Mammary epithelial cell (primary cell): ENCODE measurements at regions of chr5 and their contacts with region 1.

Region 1: GRCh38 chr5:140718241-140718580 is 18.0 kb downstream of the ZMAT2 start:
- DNase-seq: no peak
- H3K4me3 ChIP-seq: no peak overlapping the region
- H3K27ac ChIP-seq: no peak overlapping the region
- H3K4me1 ChIP-seq: peaks cover 4% of the 10 kb centered on the region
- H3K27me3 ChIP-seq: no peaks in the 10 kb centered on the region
- CTCF ChIP-seq: no peak

Region 2: GRCh38 chr5:139108063-139108824 is 1610.0 kb before region 1 on chr5:
- CTCF ChIA-PET with region 1: no interaction called
- dilution Hi-C with region 1: no loop called
- in situ Hi-C with region 1: no loop called
- intact Hi-C with region 1: no loop called
- DNase-seq: peak; percentile 50
- H3K4me3 ChIP-seq: no peak overlapping the region
- H3K27ac ChIP-seq: no peak overlapping the region
- H3K4me1 ChIP-seq: peaks cover 23% of the 10 kb centered on the region
- H3K27me3 ChIP-seq: no peaks in the 10 kb centered on the region
- CTCF ChIP-seq: no peak

Region 3: DNA sequence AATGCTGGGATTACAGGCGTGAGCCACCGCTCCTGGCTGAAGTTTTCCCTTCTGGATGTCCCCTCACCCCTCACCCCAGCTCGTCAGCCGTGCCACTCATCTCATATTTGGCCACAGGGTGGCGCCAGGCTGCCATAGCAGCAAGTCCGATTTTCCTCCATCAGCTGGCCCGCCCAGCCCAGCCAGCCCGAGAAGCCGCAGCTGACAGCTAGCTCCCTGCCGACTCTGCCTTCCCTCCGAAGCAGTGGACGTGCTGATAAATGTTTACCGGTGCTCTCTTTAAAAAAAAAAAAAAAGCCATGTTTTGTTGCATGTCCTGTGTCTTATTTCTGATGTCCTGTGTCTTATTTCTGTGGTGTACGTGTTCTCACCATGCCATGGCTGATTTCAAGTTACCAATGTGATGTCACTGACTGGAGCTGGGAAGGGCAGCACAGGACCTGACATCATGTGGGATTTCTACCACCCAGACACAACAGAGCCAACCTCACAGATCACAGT is 473.6 kb before region 1 on chr5:
- CTCF ChIA-PET with region 1: no interaction called
- dilution Hi-C with region 1: no loop called
- in situ Hi-C with region 1: no loop called
- intact Hi-C with region 1: loop called (anchors 5 kb)
- DNase-seq: peak; percentile 73
- H3K4me3 ChIP-seq: no peak overlapping the region
- H3K27ac ChIP-seq: no peak overlapping the region
- H3K4me1 ChIP-seq: peaks cover 42% of the 10 kb centered on the region
- H3K27me3 ChIP-seq: no peaks in the 10 kb centered on the region
- CTCF ChIP-seq: peak; percentile 62 to 84

Region 4: GRCh38 chr5:140362860-140363630 is 355.2 kb before region 1 on chr5:
- CTCF ChIA-PET with region 1: no interaction called
- dilution Hi-C with region 1: no loop called
- in situ Hi-C with region 1: no loop called
- intact Hi-C with region 1: loop called (anchors 1 kb)
- DNase-seq: peak; percentile 68
- H3K4me3 ChIP-seq: peak overlapping the region in 2 of 3 experiments; percentile 34 to 47
- H3K27ac ChIP-seq: no peak overlapping the region
- H3K4me1 ChIP-seq: peaks cover 27% of the 10 kb centered on the region
- H3K27me3 ChIP-seq: no peaks in the 10 kb centered on the region
- CTCF ChIP-seq: peak; percentile 95 to 96

Region 5: GRCh38 chr5:140639148-140639979 is 78.8 kb before region 1 on chr5 and contains the start of gene TMCO6:
- CTCF ChIA-PET with region 1: interaction called, 3 read pairs
- dilution Hi-C with region 1: no loop called
- in situ Hi-C with region 1: no loop called
- intact Hi-C with region 1: loop called (anchors 2 kb)
- DNase-seq: peak; percentile 92
- H3K4me3 ChIP-seq: peak within 1 kb of the TSS; percentile 69 to 78 (median 76)
- H3K27ac ChIP-seq: peak within 1 kb of the TSS; percentile 38
- H3K4me1 ChIP-seq: peaks cover 11% of the 10 kb centered on the region
- H3K27me3 ChIP-seq: no peaks in the 10 kb centered on the region
- CTCF ChIP-seq: peak; percentile 21 to 66
- total RNA-seq, gene TMCO6: 4.0 to 16.5 TPM

Region 6: GRCh38 chr5:140664359-140665119 is 53.7 kb before region 1 on chr5 and contains the start of gene WDR55:
- CTCF ChIA-PET with region 1: no interaction called
- dilution Hi-C with region 1: no loop called
- in situ Hi-C with region 1: no loop called
- intact Hi-C with region 1: loop called (anchors 1 kb)
- DNase-seq: peak; percentile 93
- H3K4me3 ChIP-seq: peak within 1 kb of the TSS; percentile 80 to 87 (median 83)
- H3K27ac ChIP-seq: peak within 1 kb of the TSS; percentile 75
- H3K4me1 ChIP-seq: peaks cover 3% of the 10 kb centered on the region
- H3K27me3 ChIP-seq: no peaks in the 10 kb centered on the region
- CTCF ChIP-seq: no peak
- total RNA-seq, gene WDR55: 18.3 to 26.8 TPM

Region 7: DNA sequence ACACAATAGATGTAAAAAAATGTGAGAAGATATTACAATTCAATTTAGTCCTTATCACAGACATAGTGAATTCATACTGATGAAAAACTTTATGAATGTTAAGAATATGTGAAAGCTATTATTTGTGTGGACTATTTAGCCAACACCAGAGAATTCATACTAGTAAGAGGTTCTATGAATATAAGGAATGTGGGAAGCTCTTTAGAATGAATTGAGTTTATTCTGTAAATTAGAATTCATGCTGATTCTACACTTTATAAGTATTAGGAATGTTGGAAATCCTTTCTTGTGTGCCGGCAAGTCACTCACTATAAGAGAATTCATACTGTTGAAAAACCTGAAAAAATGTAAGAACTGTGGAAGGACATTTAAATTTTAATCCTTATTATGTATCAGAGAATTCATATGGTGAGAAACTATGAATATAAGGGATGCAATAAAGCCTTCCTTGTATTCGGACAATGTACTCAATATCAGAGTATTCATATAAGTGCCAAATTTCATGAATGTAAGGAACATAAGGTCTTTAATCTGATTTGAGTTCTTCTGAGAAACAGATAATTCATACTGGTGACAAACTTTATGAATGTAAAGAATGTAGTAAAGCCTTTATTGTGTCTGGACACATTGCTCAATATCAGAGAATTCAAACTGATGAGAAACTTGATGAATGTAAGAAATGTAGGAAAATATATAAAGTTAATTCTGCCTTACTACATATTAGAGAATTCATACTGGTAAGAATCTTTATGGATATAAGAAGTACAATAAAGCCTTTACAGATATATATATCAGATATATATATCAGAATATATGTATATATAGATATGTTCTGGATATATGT is 46.2 kb after region 1 on chr5:
- CTCF ChIA-PET with region 1: no interaction called
- dilution Hi-C with region 1: no loop called
- in situ Hi-C with region 1: no loop called
- intact Hi-C with region 1: no loop called
- DNase-seq: no peak
- H3K4me3 ChIP-seq: no peak overlapping the region
- H3K27ac ChIP-seq: no peak overlapping the region
- H3K4me1 ChIP-seq: no peaks in the 10 kb centered on the region
- H3K27me3 ChIP-seq: no peaks in the 10 kb centered on the region
- CTCF ChIP-seq: no peak